ENCODE measurements at regions of chr20 and their contacts with region 1.

Region 1: DNA sequence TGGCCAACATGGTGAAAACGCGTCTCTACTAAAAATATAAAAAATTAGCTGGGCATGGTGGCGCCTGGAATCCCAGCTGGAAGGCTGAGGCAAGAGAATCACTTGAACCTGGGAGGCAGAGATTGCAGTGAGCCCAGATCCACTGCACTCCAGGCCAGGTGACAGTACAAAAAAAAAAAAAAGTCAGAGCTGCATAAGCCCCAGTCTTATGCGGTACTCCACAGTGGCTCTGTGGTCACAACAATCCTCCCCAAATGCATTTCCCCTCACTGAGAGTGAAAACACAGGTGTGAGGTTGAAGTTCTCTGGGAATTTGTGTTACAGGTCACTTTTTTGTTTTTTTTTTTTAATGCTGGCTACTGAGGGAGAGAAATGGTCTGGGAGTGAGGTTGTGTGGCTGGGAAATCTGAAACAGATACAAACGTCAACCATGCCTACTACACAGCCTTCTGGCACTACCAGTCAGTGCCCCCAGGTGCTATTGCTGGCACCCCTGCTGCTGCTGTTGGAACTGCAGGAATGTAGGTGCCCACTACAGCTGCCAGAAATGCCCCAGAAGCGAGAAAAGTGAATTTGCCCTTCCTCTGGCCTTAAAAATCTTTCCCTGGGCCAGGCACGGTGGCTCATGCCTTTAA is 5.7 kb downstream of the MRPS26 start:
- DNase-seq: no peak
- H3K27ac ChIP-seq: no peak overlapping the region; the same call in 1 of the 2 replicates
- CTCF ChIP-seq: no peak

Region 2: DNA sequence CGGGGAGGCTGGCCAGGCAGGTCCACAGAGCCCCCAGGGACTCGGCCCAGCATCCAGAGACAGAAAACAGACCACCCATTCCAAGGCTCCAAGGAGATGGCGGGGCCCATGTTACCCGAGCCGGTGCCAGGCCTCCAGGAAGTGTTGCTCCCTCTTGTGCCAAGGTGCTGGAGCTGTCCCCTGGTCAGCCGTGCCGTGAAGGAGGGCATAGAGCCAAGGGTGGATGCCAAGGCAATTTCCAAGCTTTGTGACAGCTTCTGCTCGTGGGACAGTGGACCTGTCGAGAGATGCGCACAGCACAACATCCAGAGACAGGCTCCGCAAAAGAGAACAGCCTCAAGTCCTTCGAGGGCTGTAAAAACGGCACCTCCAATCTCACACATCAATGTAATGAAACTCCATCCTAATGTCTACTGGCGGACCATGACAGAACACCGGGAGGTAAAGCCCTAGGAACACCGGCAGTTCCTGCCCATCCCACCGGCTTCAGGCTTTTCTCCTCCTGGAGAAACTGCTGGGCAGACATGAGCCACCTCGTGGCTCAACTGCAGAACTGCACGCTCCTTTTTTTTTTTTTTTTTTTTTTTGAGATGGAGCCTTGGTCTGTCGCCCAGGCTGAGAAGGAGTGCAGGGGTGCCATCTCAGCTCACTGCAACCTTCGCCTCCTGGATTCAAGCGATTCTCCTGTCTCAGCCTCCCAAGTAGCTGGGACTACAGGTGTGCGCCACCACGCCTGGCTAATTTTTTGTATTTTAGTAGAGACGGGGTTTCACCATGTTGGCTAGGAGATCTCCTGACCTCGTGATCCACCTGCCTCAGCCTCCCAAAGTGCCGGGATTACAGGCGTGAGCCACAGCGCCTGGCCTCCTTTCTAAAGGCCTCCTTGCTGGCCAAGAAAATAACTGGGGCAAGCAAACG is 63.9 kb after region 1 on chr20:
- CTCF ChIA-PET with region 1: interaction called, 20 read pairs
- POLR2A ChIA-PET with region 1: no interaction called
- DNase-seq: peak; percentile 88
- H3K27ac ChIP-seq: peak overlapping the region; percentile 2; the same call in 1 of the 2 replicates
- CTCF ChIP-seq: peak; percentile 95